ENCODE measurements at regions of chr20 and their contacts with region 1.

Region 1: DNA sequence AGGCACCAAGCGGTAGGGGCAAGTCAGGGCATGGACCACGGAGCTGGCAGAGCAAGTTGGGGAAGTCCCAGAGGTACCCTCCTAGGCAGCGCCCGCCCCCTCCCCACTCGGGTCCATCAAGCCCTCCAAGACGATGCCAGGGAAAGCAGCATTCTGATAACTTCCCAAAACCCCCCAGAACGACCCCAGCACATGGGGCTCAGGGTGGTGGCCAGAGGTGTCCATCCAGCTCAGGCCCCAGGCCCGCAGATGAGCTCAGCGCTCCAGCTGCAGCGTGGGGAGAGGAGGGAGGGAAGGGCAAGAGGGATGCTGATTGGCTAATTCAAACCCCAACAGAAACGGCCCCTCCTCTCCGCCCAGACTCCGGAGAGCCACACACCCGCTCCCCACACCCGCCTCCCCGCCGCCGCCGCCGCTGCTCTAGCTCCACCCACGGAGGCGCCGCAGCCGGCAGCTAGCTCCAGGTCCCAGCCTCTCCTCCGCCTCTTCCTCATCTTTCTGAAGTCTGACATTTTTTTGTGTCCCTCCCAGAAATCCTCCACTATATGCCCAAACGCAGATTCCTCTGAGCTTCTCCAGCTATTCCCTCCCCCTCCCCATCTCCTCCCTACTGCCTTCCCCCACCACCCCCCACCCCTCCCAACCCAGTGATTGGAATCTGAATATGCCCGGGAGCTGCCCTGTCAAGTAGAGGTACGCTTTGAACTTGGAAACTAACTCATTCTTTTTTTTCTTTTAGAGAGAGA is 40.3 kb upstream of the TLDC2 start:
- DNase-seq: peak; percentile 72
- ATAC-seq: peak; percentile 92
- H3K4me3 Mint-ChIP-seq: peak overlapping the region; percentile 79
- H3K27ac Mint-ChIP-seq: peak overlapping the region; percentile 74
- H3K4me1 Mint-ChIP-seq: peaks cover 49% of the 10 kb centered on the region
- H3K27me3 Mint-ChIP-seq: no peaks in the 10 kb centered on the region
- CTCF ChIP-seq: no peak

Region 2: GRCh38 chr20:36808317-36809257 is 27.0 kb before region 1 on chr20:
- CTCF ChIA-PET with region 1: interaction called, 28 read pairs
- POLR2A ChIA-PET with region 1: interaction called, 6 read pairs
- intact Hi-C with region 1: no loop called
- DNase-seq: peak; percentile 62
- ATAC-seq: peak; percentile 71
- H3K4me3 Mint-ChIP-seq: no peak overlapping the region
- H3K27ac Mint-ChIP-seq: peak overlapping the region; percentile 35
- H3K4me1 Mint-ChIP-seq: peaks cover 3% of the 10 kb centered on the region
- H3K27me3 Mint-ChIP-seq: no peaks in the 10 kb centered on the region
- CTCF ChIP-seq: peak; percentile 71

Region 3: GRCh38 chr20:36847009-36847709 is 11.5 kb after region 1 on chr20:
- CTCF ChIA-PET with region 1: interaction called, 6 read pairs
- POLR2A ChIA-PET with region 1: interaction called, 73 read pairs
- intact Hi-C with region 1: loop called (anchors 1 kb)
- DNase-seq: no peak
- ATAC-seq: no peak
- H3K4me3 Mint-ChIP-seq: peak overlapping the region; percentile 74
- H3K27ac Mint-ChIP-seq: peak overlapping the region; percentile 95
- H3K4me1 Mint-ChIP-seq: peaks cover 91% of the 10 kb centered on the region
- H3K27me3 Mint-ChIP-seq: no peaks in the 10 kb centered on the region
- CTCF ChIP-seq: no peak

Region 4: DNA sequence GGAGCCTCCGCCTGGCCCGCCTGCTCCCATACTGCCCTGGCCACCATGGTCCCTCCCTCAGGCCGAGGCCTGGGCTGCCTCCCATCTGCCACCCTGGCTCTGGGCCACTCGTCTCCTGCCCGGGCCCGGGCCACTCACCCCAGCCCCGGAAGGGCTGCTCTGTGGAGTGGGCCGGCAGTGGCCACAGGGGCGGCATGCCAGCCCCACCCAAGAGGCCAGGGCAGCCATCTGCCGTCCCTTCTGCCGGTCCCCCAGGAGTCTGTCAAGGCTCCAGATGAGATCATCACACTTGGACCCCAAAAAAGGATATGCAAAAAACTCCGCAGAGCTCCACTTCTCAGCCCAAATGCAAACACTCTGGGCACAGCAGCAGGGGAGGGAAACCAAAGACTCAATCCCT is 16.6 kb after region 1 on chr20:
- CTCF ChIA-PET with region 1: interaction called, 6 read pairs
- POLR2A ChIA-PET with region 1: interaction called, 73 read pairs
- intact Hi-C with region 1: no loop called
- DNase-seq: no peak
- ATAC-seq: peak; percentile 20
- H3K4me3 Mint-ChIP-seq: peak overlapping the region; percentile 59
- H3K27ac Mint-ChIP-seq: peak overlapping the region; percentile 85
- H3K4me1 Mint-ChIP-seq: peaks cover 80% of the 10 kb centered on the region
- H3K27me3 Mint-ChIP-seq: no peaks in the 10 kb centered on the region
- CTCF ChIP-seq: no peak